ENCODE measurements at regions of chr4 and their contacts with region 1.

Region 1: GRCh38 chr4:44869222-44869882 is 143.0 kb upstream of the GNPDA2 start:
- DNase-seq: no peak
- ATAC-seq: no peak
- H3K4me3 ChIP-seq: no peak overlapping the region
- H3K27ac ChIP-seq: no peak overlapping the region
- H3K4me1 ChIP-seq: no peaks in the 10 kb centered on the region
- H3K27me3 ChIP-seq: no peaks in the 10 kb centered on the region
- CTCF ChIP-seq: no peak

Region 2: GRCh38 chr4:45804006-45804405 is 934.7 kb after region 1 on chr4:
- intact Hi-C with region 1: loop called in 1 of 2 experiments (anchors 10 kb)
- DNase-seq: no peak
- ATAC-seq: no peak
- H3K4me3 ChIP-seq: no peak overlapping the region
- H3K27ac ChIP-seq: no peak overlapping the region
- H3K4me1 ChIP-seq: no peaks in the 10 kb centered on the region
- H3K27me3 ChIP-seq: no peaks in the 10 kb centered on the region
- CTCF ChIP-seq: no peak

Measured in psoas muscle (tissue), 8 donors.